KBM-7 (cell line): ENCODE measurements at regions of chr1 and their contacts with region 1.

Region 1: DNA sequence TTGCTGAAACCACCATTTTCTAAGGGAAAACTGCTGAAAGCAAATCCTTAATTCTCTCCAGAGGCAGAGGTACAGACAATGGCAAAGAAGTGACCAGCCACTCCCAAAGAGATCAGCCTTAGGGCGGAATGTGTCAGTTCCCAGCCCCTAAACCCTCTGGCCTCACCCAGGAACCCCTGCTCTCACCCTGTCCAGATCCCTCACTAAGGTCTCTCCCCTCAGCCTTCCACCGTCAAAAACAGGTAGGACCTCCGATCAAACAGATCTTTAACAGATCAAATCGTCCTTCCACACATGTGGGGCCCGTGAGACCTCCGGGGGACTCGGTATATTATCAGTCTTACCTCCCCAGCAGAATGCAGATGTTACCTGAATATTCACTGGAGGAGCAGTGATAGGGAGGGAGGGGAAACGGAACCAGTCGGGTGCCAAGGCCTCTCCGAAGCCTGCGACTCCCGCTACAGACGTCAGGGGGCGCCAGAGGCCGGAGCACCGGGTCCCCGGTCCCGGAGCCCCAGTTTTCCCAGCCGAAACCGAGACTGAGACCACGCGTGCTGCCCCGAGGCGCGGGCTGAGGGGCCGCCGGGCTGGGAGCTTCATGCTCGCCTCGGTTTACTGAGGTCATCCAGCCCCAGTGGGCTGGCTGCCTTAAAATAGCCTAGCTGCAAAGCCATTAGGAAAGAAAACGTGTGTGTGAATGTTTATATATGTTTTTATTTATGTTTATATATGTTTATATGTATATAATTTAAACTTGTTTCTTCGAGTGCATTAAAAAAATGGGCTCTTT is 23.6 kb downstream of the GPA33 start:
- DNase-seq: peak; percentile 87

Region 2: GRCh38 chr1:167121375-167122120 is 55.0 kb after region 1 on chr1:
- in situ Hi-C with region 1: loop called (anchors 10 kb)
- DNase-seq: no peak

Region 3: GRCh38 chr1:167219646-167220536 is 153.4 kb after region 1 on chr1:
- in situ Hi-C with region 1: loop called (anchors 10 kb)
- DNase-seq: peak; percentile 93